ENCODE measurements at regions of chr12 and their contacts with region 1.

Region 1: GRCh38 chr12:98227162-98227561 is 288.2 kb upstream of the TMPO start:
- DNase-seq: no peak
- H3K4me3 ChIP-seq: no peak overlapping the region
- H3K27ac ChIP-seq: no peak overlapping the region
- H3K4me1 ChIP-seq: no peaks in the 10 kb centered on the region
- H3K27me3 ChIP-seq: no peaks in the 10 kb centered on the region
- CTCF ChIP-seq: peak; percentile 37 to 80 (median 63)
- EP300 ChIP-seq: no peak
- POLR2A ChIP-seq: no peak
- RAD21 ChIP-seq: peak; percentile 81 to 83

Region 2: DNA sequence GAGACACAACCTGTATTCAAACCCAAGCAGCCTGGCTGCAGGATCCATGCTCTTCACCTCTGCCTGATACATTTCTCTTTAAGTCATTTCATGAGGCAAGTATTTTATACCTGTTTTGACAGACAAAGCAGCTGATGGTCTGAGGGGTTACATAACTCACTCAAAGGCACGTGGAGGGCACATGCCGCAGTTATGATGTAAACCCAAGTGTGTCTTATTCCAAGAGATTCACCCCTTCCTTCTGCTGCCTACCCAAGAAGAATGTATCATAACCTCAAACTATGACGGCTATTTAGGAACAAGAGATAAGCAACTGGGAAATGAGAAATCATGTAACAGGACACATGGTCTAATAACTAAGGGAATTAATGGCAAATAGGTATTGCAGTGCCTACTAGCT is 41.6 kb before region 1 on chr12:
- CTCF ChIA-PET with region 1: no interaction called
- POLR2A ChIA-PET with region 1: no interaction called
- DNase-seq: no peak
- H3K4me3 ChIP-seq: no peak overlapping the region
- H3K27ac ChIP-seq: no peak overlapping the region
- H3K4me1 ChIP-seq: peaks cover 0 to 4% (median 0%) of the 10 kb centered on the region in 4 experiments; a peak in 2 of 7 replicates
- H3K27me3 ChIP-seq: no peaks in the 10 kb centered on the region
- CTCF ChIP-seq: no peak
- EP300 ChIP-seq: no peak
- POLR2A ChIP-seq: no peak
- RAD21 ChIP-seq: no peak

Region 3: GRCh38 chr12:98211909-98212695 is 15.1 kb before region 1 on chr12:
- CTCF ChIA-PET with region 1: interaction called, 67 read pairs
- POLR2A ChIA-PET with region 1: no interaction called
- DNase-seq: no peak
- H3K4me3 ChIP-seq: no peak overlapping the region
- H3K27ac ChIP-seq: no peak overlapping the region
- H3K4me1 ChIP-seq: no peaks in the 10 kb centered on the region; a peak in 1 of 7 replicates
- H3K27me3 ChIP-seq: no peaks in the 10 kb centered on the region
- CTCF ChIP-seq: no peak
- EP300 ChIP-seq: no peak
- POLR2A ChIP-seq: no peak
- RAD21 ChIP-seq: no peak

Region 4: DNA sequence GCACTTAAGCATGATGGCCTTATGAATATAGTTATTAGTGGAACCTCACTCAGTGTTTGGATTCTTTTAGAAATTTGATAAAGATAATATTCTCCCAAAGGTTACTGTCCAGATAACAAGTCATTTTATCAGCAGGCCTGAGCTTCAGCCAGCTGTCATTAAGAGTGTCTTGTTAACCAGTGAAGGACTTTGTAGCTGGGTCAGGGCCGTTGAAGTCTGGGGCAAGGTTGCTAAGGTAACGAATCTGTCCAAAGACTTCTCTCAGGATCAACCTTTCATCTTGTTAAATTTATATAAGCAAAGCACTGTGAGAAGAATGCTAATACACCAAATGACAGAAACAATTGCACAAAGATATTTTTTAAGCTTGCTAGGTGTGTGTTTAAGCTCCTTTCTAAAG is 17.0 kb after region 1 on chr12:
- CTCF ChIA-PET with region 1: interaction called, 47 read pairs
- POLR2A ChIA-PET with region 1: no interaction called
- DNase-seq: no peak
- H3K4me3 ChIP-seq: no peak overlapping the region
- H3K27ac ChIP-seq: no peak overlapping the region
- H3K4me1 ChIP-seq: no peaks in the 10 kb centered on the region
- H3K27me3 ChIP-seq: no peaks in the 10 kb centered on the region
- CTCF ChIP-seq: no peak
- EP300 ChIP-seq: no peak
- POLR2A ChIP-seq: no peak
- RAD21 ChIP-seq: no peak

Region 5: GRCh38 chr12:98260276-98260675 is 33.1 kb after region 1 on chr12:
- CTCF ChIA-PET with region 1: interaction called, 11 read pairs
- POLR2A ChIA-PET with region 1: no interaction called
- DNase-seq: no peak
- H3K4me3 ChIP-seq: no peak overlapping the region
- H3K27ac ChIP-seq: no peak overlapping the region
- H3K4me1 ChIP-seq: no peaks in the 10 kb centered on the region
- H3K27me3 ChIP-seq: no peaks in the 10 kb centered on the region
- CTCF ChIP-seq: no peak
- EP300 ChIP-seq: no peak
- POLR2A ChIP-seq: no peak
- RAD21 ChIP-seq: no peak

Region 6: GRCh38 chr12:98355322-98355721 is 128.2 kb after region 1 on chr12:
- CTCF ChIA-PET with region 1: interaction called, 12 read pairs
- POLR2A ChIA-PET with region 1: no interaction called
- DNase-seq: no peak
- H3K4me3 ChIP-seq: no peak overlapping the region
- H3K27ac ChIP-seq: no peak overlapping the region
- H3K4me1 ChIP-seq: no peaks in the 10 kb centered on the region
- H3K27me3 ChIP-seq: no peaks in the 10 kb centered on the region
- CTCF ChIP-seq: no peak
- EP300 ChIP-seq: no peak
- POLR2A ChIP-seq: no peak
- RAD21 ChIP-seq: no peak

Region 7: GRCh38 chr12:98397316-98398105 is 170.3 kb after region 1 on chr12:
- CTCF ChIA-PET with region 1: interaction called, 34 read pairs
- POLR2A ChIA-PET with region 1: no interaction called
- DNase-seq: peak; percentile 64 to 91
- H3K4me3 ChIP-seq: peak overlapping the region; percentile 24 to 59 (median 34); a peak in 7 of 8 replicates
- H3K27ac ChIP-seq: no peak overlapping the region
- H3K4me1 ChIP-seq: peaks cover 0 to 10% (median 7%) of the 10 kb centered on the region in 4 experiments; a peak in 5 of 7 replicates
- H3K27me3 ChIP-seq: no peaks in the 10 kb centered on the region
- CTCF ChIP-seq: peak; percentile 85 to 88 (median 86)
- EP300 ChIP-seq: no peak
- POLR2A ChIP-seq: no peak
- RAD21 ChIP-seq: peak; percentile 91 to 93

Measured in H1 (cell line).